Activated CD4-positive, alpha-beta memory T cell treated with anti-CD3 and anti-CD28 coated beads for 36 hours (primary cell): ENCODE measurements at regions of chr2 and their contacts with region 1.

Region 1: GRCh38 chr2:197113275-197113711 is 186.8 kb upstream of the PGAP1 start:
- DNase-seq: no peak
- H3K4me3 Mint-ChIP-seq: no peak overlapping the region
- H3K27ac Mint-ChIP-seq: peak overlapping the region; percentile 76
- H3K4me1 Mint-ChIP-seq: peaks cover 20% of the 10 kb centered on the region
- H3K27me3 Mint-ChIP-seq: no peaks in the 10 kb centered on the region

Region 2: DNA sequence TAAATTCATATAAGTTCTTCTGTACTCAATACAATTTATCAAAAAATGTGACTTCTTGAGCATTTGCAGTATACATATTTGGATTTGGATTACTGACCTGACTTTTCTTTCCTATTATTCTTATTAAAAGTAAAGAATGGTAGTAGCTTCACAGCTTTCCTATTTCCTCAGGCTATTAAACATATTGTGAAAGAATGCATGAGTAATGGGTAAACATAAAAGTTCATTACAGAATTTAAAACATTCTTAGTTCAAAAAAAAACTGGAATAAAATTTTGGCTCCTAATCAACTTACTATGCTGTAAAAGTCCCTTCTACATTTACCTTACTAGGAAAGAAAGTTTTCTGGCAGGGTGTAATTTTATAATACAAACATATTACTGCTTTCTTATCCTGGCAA is 276.9 kb before region 1 on chr2:
- CTCF ChIA-PET with region 1: no interaction called
- POLR2A ChIA-PET with region 1: no interaction called
- intact Hi-C with region 1: no loop called
- DNase-seq: no peak
- H3K4me3 Mint-ChIP-seq: no peak overlapping the region
- H3K27ac Mint-ChIP-seq: no peak overlapping the region
- H3K4me1 Mint-ChIP-seq: no peaks in the 10 kb centered on the region
- H3K27me3 Mint-ChIP-seq: no peaks in the 10 kb centered on the region

Region 3: DNA sequence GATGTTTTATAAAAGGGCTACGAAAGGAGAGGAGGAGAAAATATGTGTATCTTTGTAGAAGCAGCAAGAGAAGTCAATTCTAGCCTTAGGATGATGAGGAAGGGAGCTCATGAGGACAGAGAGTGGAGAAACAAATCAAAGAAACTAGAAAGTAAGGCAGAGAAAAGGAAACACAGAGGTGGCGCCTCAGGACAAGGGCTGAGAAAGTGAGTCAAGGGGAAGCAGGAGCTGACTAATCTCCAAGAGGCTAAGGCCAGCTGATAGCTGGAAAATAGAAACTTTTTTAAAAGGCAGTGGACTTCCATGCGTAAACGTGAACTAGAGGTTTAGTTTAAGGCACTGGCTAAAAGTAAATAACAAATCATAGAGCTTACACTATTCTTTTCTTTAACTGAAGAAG is 23.9 kb after region 1 on chr2:
- CTCF ChIA-PET with region 1: interaction called, 27 read pairs
- POLR2A ChIA-PET with region 1: no interaction called
- intact Hi-C with region 1: no loop called
- DNase-seq: peak; percentile 52
- H3K4me3 Mint-ChIP-seq: no peak overlapping the region
- H3K27ac Mint-ChIP-seq: peak overlapping the region; percentile 44
- H3K4me1 Mint-ChIP-seq: peaks cover 85% of the 10 kb centered on the region
- H3K27me3 Mint-ChIP-seq: no peaks in the 10 kb centered on the region

Region 4: DNA sequence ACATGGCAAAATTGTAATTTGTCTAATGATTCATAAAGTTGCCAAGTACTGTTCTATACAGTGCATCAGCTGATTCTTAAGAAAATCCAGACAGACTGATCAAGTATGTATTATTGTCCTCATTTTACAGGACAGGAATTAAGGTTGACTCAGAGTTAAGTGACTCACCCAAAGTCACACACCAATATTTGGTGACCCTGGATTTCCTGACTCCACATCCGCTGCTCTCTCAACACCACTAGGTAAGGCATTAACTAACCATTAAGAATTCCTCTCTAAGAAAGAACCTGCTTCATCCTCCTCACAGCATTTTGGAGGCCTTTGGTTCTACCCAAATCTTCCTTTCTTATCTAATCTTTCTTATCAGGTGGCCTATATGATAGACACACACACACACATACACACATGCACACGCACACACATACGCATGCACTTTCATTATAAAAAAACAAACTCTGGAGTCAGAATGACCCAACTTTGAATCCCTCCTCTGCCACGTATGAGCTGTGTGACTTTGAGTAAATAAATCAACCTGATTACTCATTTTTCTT is 46.4 kb after region 1 on chr2:
- CTCF ChIA-PET with region 1: interaction called, 14 read pairs
- POLR2A ChIA-PET with region 1: no interaction called
- intact Hi-C with region 1: no loop called
- DNase-seq: peak; percentile 64
- H3K4me3 Mint-ChIP-seq: peak overlapping the region; percentile 0
- H3K27ac Mint-ChIP-seq: peak overlapping the region; percentile 87
- H3K4me1 Mint-ChIP-seq: peaks cover 72% of the 10 kb centered on the region
- H3K27me3 Mint-ChIP-seq: no peaks in the 10 kb centered on the region

Region 5: GRCh38 chr2:197324801-197325200 is 211.5 kb after region 1 on chr2:
- CTCF ChIA-PET with region 1: interaction called, 11 read pairs
- POLR2A ChIA-PET with region 1: no interaction called
- intact Hi-C with region 1: no loop called
- DNase-seq: no peak
- H3K4me3 Mint-ChIP-seq: no peak overlapping the region
- H3K27ac Mint-ChIP-seq: peak overlapping the region; percentile 78
- H3K4me1 Mint-ChIP-seq: peaks cover 74% of the 10 kb centered on the region
- H3K27me3 Mint-ChIP-seq: no peaks in the 10 kb centered on the region

Region 6: DNA sequence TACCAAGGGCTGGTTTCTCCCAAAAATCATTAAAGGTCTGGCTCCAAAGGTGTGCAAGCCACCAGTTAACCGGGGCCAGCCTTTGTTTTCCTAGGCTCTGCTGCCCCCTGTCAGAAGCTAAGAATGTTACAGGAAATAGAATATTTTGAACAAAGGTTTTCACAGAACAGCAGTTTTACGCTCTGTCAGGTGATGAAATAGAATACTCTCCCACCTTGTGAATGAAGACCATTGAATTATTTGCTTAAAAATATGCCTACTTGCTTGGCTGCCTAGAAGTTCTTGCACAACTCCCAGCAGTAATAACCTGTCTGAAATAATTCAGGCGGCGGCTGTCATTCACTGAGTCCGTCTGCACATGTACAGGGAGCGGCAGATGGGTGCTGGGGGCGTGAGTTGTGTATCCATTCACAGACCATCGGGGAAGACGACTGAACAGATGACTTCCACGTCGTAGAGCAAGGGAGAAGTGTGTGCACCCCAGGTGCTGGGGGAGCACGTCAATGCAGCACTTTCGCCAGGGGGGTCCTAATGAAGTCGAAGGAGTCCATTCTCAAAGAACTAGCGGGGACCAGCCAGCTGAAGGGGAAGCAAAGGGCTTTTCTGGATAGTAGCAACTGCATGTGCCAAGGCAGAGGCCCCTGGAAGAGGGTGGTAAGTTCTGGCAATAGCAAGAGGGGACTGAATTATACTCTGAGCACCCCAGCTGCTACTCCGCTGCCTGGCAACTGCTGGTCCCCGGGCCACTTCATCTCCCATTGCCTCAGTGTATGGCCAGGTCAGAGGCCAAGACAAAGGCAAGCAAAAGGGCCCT is 265.4 kb after region 1 on chr2:
- CTCF ChIA-PET with region 1: interaction called, 42 read pairs
- POLR2A ChIA-PET with region 1: no interaction called
- intact Hi-C with region 1: loop called (anchors 1 kb)
- DNase-seq: peak; percentile 72
- H3K4me3 Mint-ChIP-seq: no peak overlapping the region
- H3K27ac Mint-ChIP-seq: no peak overlapping the region
- H3K4me1 Mint-ChIP-seq: peaks cover 15% of the 10 kb centered on the region
- H3K27me3 Mint-ChIP-seq: peaks cover 4% of the 10 kb centered on the region

Region 7: GRCh38 chr2:197599285-197599965 is 486.1 kb after region 1 on chr2:
- CTCF ChIA-PET with region 1: no interaction called
- POLR2A ChIA-PET with region 1: no interaction called
- intact Hi-C with region 1: no loop called
- DNase-seq: peak; percentile 30
- H3K4me3 Mint-ChIP-seq: no peak overlapping the region
- H3K27ac Mint-ChIP-seq: no peak overlapping the region
- H3K4me1 Mint-ChIP-seq: peaks cover 2% of the 10 kb centered on the region
- H3K27me3 Mint-ChIP-seq: peaks cover 18% of the 10 kb centered on the region